Dorsolateral prefrontal cortex (tissue), 120 donors: ENCODE measurements at regions of chr11 and their contacts with region 1.

Region 1: GRCh38 chr11:117529816-117530215 is 202.2 kb downstream of the CEP164 start:
- DNase-seq: peak in 1 of 10 donors; percentile 19
- H3K4me3 ChIP-seq: peak overlapping the region in 41 of 59 donors; percentile 1 to 56 (median 28)
- H3K27ac ChIP-seq: peak overlapping the region in 51 of 59 donors; percentile 4 to 82 (median 61)
- H3K27me3 ChIP-seq: no peaks in the 10 kb centered on the region
- CTCF ChIP-seq: no peak

Region 2: GRCh38 chr11:117497206-117497951 is 32.4 kb before region 1 on chr11:
- intact Hi-C with region 1: loop called (anchors 5 kb)
- DNase-seq: peak in 5 of 10 donors; percentile 35 to 65 (median 57)
- H3K4me3 ChIP-seq: peak overlapping the region in 3 of 59 donors; percentile 1 to 27 (median 8)
- H3K27ac ChIP-seq: peak overlapping the region; percentile 63 to 98 (median 90)
- H3K27me3 ChIP-seq: no peaks in the 10 kb centered on the region
- CTCF ChIP-seq: peak in 1 of 56 donors; percentile 17

Region 3: DNA sequence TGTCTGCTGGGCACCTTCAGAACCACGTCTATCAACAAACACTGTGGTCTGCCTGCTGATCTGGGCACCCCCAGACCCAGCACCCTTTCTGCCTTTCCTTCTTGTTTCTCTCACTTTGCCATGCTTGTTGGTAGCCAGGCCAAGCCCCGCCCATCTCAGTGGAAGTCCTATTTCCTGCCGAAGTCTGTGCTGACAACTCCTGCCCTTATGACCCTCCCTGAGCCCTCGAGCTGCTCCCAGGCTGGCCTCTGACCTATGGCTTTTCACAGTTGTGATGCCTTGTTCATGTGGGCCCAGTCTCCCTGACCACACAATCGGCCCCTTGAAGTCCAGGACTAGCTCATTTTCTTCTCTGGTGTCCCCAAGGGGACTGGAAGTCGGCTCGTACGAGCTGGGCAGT is 135.1 kb after region 1 on chr11:
- intact Hi-C with region 1: no loop called
- DNase-seq: no peak
- H3K4me3 ChIP-seq: no peak overlapping the region
- H3K27ac ChIP-seq: peak overlapping the region; percentile 73 to 99 (median 96)
- H3K27me3 ChIP-seq: no peaks in the 10 kb centered on the region
- CTCF ChIP-seq: no peak